ENCODE measurements at regions of chr4 and their contacts with region 1.

Region 1: GRCh38 chr4:101981709-101982130 is 191.2 kb downstream of the BANK1 start:
- DNase-seq: peak; percentile 59
- H3K4me3 Mint-ChIP-seq: no peak overlapping the region
- H3K27ac Mint-ChIP-seq: peak overlapping the region; percentile 50
- H3K4me1 Mint-ChIP-seq: peaks cover 11% of the 10 kb centered on the region
- H3K27me3 Mint-ChIP-seq: no peaks in the 10 kb centered on the region
- CTCF ChIP-seq: no peak

Region 2: GRCh38 chr4:101682946-101683345 is 298.8 kb before region 1 on chr4:
- CTCF ChIA-PET with region 1: no interaction called
- intact Hi-C with region 1: no loop called
- DNase-seq: no peak
- H3K4me3 Mint-ChIP-seq: no peak overlapping the region
- H3K27ac Mint-ChIP-seq: no peak overlapping the region
- H3K4me1 Mint-ChIP-seq: no peaks in the 10 kb centered on the region
- H3K27me3 Mint-ChIP-seq: no peaks in the 10 kb centered on the region
- CTCF ChIP-seq: no peak

Region 3: GRCh38 chr4:101790521-101791188 is 191.1 kb before region 1 on chr4 and contains the start of gene BANK1:
- CTCF ChIA-PET with region 1: no interaction called
- intact Hi-C with region 1: loop called (anchors 5 kb)
- DNase-seq: peak; percentile 67
- H3K4me3 Mint-ChIP-seq: peak within 1 kb of the TSS; percentile 82
- H3K27ac Mint-ChIP-seq: peak within 1 kb of the TSS; percentile 96
- H3K4me1 Mint-ChIP-seq: peaks cover 12% of the 10 kb centered on the region
- H3K27me3 Mint-ChIP-seq: no peaks in the 10 kb centered on the region
- CTCF ChIP-seq: peak; percentile 30
- total RNA-seq, gene BANK1: 6.4 and 7.9 TPM in 2 replicates

Region 4: GRCh38 chr4:102169345-102169744 is 187.6 kb after region 1 on chr4:
- CTCF ChIA-PET with region 1: no interaction called
- intact Hi-C with region 1: no loop called
- DNase-seq: no peak
- H3K4me3 Mint-ChIP-seq: no peak overlapping the region
- H3K27ac Mint-ChIP-seq: no peak overlapping the region
- H3K4me1 Mint-ChIP-seq: no peaks in the 10 kb centered on the region
- H3K27me3 Mint-ChIP-seq: no peaks in the 10 kb centered on the region
- CTCF ChIP-seq: no peak